ENCODE measurements at regions of chr20 and their contacts with region 1.

Region 1: DNA sequence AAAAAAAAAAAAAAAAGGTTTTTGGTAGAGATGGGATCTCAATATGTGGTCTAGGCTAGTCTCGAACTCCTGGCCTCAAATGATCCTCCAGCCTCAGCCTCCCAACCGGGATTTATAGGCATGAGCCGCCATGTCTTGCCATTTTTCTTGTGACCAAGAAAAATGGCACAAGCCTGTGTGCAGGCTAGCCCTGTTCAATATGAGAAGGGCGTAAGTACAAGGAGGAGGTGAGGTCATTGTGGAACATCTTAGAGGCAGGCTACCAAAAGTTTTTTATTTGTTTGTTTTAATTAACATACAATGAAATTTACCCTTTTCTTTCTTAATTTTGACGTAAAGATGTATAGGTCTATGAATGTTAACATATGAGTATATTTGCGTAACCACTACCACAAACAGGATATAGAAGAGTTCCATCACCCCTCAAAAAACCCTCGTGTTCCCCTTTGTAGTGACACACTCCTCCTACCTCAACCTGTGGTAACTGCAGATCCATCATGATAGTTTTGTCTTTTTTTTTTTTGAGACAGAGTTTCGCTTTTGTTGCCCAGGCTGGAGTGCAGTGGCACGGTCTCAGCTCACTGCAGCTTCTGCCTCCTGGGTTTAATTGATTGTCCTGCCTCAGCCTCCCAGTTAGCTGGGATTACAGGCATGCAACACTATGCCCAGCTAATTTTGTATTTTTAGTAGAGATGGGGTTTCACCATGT is 28.3 kb upstream of the KIF3B start:
- DNase-seq: no peak
- ATAC-seq: no peak
- H3K4me3 ChIP-seq: no peak overlapping the region
- H3K27ac ChIP-seq: no peak overlapping the region
- H3K4me1 ChIP-seq: peaks cover 9% of the 10 kb centered on the region
- H3K27me3 ChIP-seq: no peaks in the 10 kb centered on the region
- CTCF ChIP-seq: no peak

Region 2: DNA sequence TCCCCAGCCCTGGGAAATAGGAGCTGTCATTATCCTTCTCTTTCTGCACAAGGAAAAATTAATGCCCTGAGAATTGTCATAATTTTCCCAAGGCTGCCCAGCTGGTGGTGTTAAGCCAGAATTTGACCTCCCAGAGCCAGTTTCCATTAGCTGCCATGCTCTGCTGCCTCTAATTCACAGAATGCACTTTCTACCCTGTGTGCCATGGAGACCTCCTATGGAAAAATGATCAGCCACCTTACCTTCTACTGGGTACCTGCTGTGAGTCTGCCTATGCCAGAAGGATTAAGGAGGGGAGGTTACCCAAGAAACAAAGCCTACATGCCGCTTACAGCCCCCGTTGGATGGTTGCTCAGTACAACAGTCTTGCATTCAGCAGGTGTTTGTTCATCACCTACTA is 12.4 kb before region 1 on chr20:
- CTCF ChIA-PET with region 1: interaction called, 10 read pairs
- POLR2A ChIA-PET with region 1: interaction called, 5 read pairs
- in situ Hi-C with region 1: no loop called
- intact Hi-C with region 1: no loop called
- DNase-seq: no peak
- ATAC-seq: no peak
- H3K4me3 ChIP-seq: no peak overlapping the region
- H3K27ac ChIP-seq: no peak overlapping the region
- H3K4me1 ChIP-seq: peaks cover 6% of the 10 kb centered on the region; the same call in 1 of the 2 replicates
- H3K27me3 ChIP-seq: no peaks in the 10 kb centered on the region
- CTCF ChIP-seq: no peak

Region 3: GRCh38 chr20:32396646-32397160 is 147.5 kb after region 1 on chr20:
- CTCF ChIA-PET with region 1: no interaction called
- POLR2A ChIA-PET with region 1: no interaction called
- in situ Hi-C with region 1: no loop called
- intact Hi-C with region 1: no loop called
- DNase-seq: no peak
- ATAC-seq: no peak
- H3K4me3 ChIP-seq: no peak overlapping the region
- H3K27ac ChIP-seq: no peak overlapping the region
- H3K4me1 ChIP-seq: no peaks in the 10 kb centered on the region
- H3K27me3 ChIP-seq: no peaks in the 10 kb centered on the region
- CTCF ChIP-seq: no peak

Measured in Panc1 (cell line).